B cell (primary cell): ENCODE measurements at regions of chr5 and their contacts with region 1.

Region 1: DNA sequence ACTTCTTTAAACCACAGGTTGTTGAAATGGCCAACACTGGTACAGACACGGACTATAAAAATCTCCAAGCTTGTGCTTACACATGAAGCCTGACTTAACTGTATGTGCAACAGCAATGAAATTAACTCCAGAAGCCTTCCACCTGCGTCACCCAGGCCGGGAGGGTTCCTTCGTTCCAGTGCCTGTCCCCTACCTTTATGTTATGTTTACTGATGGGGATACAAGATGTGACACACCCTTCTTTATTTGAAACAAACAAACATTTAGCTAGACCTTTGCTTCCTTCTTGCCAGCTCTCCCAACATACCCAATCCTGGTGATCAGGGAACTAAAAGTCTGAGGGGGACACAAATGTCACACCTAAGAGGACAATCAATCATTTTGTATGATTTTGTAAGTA is 65.9 kb downstream of the GOLPH3 start:
- DNase-seq: no peak
- ATAC-seq: no peak
- H3K4me3 ChIP-seq: no peak overlapping the region
- H3K4me3 Mint-ChIP-seq: no peak overlapping the region
- H3K27ac ChIP-seq: no peak overlapping the region
- H3K27ac Mint-ChIP-seq: no peak overlapping the region
- H3K4me1 ChIP-seq: no peaks in the 10 kb centered on the region
- H3K4me1 Mint-ChIP-seq: no peaks in the 10 kb centered on the region
- H3K27me3 ChIP-seq: no peaks in the 10 kb centered on the region
- H3K27me3 Mint-ChIP-seq: no peaks in the 10 kb centered on the region
- CTCF ChIP-seq: no peak

Region 2: DNA sequence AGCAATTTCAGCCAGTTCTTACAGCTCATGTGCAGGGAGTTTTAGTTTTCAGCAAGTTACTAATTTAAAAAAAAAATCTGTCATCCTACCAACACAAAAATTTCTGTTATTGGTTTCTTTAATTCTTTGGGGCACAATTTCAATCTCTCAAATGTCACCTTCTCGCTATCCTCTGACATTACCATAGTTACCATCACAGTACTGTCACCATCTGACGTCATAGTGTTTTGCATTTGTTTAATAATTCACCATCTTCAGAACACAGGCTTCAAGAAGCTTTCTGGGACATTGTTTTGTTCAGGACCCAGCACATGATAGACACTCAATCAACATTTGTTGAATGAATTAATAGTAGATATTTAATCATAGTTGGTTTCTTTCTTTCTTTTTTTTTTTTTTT is 314.2 kb before region 1 on chr5:
- CTCF ChIA-PET with region 1: no interaction called
- POLR2A ChIA-PET with region 1: no interaction called
- intact Hi-C with region 1: no loop called
- DNase-seq: no peak
- ATAC-seq: no peak
- H3K4me3 ChIP-seq: no peak overlapping the region
- H3K4me3 Mint-ChIP-seq: no peak overlapping the region
- H3K27ac ChIP-seq: no peak overlapping the region
- H3K27ac Mint-ChIP-seq: no peak overlapping the region
- H3K4me1 ChIP-seq: no peaks in the 10 kb centered on the region
- H3K4me1 Mint-ChIP-seq: no peaks in the 10 kb centered on the region
- H3K27me3 ChIP-seq: no peaks in the 10 kb centered on the region
- H3K27me3 Mint-ChIP-seq: no peaks in the 10 kb centered on the region
- CTCF ChIP-seq: no peak

Region 3: DNA sequence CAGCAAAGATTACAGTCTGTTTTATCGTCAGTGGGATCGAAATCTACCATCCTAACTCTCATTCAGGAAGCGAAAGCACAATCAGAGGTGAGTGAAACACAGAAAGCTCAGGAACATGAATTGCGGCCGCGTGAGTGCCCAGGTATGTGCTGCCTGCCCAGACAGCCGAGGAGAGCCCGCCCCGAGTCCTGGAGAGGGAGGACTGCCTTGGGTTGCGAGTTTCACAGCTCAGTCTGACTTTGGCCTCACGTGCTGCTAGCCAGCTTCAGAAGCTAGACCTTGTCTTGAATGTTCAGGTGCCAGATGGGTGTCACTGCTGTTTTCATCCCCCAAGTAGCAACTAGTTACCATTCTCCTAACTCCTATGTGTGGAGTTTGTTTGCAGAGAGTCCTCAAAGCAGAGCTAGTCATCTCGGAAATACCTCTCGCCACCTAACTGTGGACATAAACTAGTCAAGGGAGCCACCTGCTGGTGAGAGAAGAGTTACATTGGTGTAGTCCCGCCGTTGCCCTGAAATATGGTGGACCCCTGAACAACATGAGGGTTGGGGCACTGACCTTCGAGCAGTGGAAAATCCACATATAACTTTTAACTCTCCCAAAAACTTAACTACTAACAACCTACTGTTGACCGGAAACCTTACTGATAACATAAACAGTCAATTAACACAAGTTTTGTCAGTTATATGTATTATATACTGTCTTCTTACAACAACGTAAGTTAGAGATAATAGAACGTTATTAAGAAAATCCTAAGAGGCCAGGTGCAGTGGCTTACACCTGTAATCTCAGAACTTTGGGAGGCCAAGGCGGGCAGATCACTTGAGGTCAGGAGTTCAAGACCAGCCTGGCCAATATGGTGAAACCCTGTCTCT is 15.0 kb before region 1 on chr5:
- CTCF ChIA-PET with region 1: interaction called, 11 read pairs
- POLR2A ChIA-PET with region 1: no interaction called
- intact Hi-C with region 1: no loop called
- DNase-seq: peak; percentile 66
- ATAC-seq: peak; percentile 60
- H3K4me3 ChIP-seq: no peak overlapping the region
- H3K4me3 Mint-ChIP-seq: no peak overlapping the region
- H3K27ac ChIP-seq: no peak overlapping the region
- H3K27ac Mint-ChIP-seq: no peak overlapping the region
- H3K4me1 ChIP-seq: peaks cover 0 to 5% of the 10 kb centered on the region in 2 donors
- H3K4me1 Mint-ChIP-seq: peaks cover 5% of the 10 kb centered on the region
- H3K27me3 ChIP-seq: no peaks in the 10 kb centered on the region
- H3K27me3 Mint-ChIP-seq: no peaks in the 10 kb centered on the region
- CTCF ChIP-seq: peak; percentile 72